ENCODE measurements at regions of chr20 and their contacts with region 1.

Region 1: GRCh38 chr20:33731693-33732165 is at the start of gene ZNF341:
- DNase-seq: peak in 1 of 2 experiments; percentile 69
- H3K4me3 ChIP-seq: peak within 1 kb of the TSS; percentile 64
- H3K27ac ChIP-seq: peak within 1 kb of the TSS; percentile 94
- H3K4me1 ChIP-seq: peaks cover 59% of the 10 kb centered on the region
- H3K27me3 ChIP-seq: no peaks in the 10 kb centered on the region
- CTCF ChIP-seq: peak; percentile 83
- total RNA-seq, gene ZNF341: 5.2 and 5.6 TPM in 2 replicates

Region 2: DNA sequence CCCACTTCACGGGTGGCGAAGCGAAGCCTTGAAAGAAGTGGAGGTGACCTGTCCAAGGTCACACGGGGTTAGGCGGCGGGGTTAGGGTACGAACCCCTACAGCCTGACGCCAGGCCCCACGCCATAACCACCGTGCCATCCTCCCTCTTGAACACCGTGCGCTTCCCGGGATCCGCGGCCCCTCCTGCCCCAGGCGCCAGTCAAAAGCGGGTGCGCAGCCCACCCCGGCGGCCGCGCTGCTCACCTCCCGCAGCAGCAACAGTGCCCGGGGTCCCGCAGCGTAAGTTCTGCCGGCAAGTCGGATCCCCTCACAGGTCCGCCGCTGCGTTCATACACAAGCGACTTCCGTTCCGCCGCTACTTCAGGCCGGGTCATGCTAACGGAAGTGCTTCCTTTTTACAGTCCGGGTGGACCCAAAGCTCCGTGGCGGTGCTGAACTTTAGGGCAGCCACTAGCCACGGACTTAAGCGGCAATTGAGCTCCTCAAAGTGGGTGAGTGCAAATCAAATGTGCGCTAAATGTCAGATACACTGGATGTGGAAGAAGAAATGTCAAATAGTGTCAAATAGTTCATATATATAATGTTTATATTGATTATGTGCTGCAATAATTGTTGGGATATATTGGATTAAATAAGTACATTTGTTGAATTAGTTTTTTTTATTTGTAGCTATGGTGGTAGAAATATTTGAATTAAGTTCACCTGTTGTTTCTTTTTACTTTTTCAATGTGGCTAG is 330.4 kb before region 1 on chr20 and contains the start of gene CDK5RAP1:
- CTCF ChIA-PET with region 1: no interaction called
- POLR2A ChIA-PET with region 1: no interaction called
- intact Hi-C with region 1: loop called (anchors 5 kb)
- DNase-seq: peak; percentile 82
- H3K4me3 ChIP-seq: peak within 1 kb of the TSS; percentile 98
- H3K27ac ChIP-seq: no peak within 1 kb of the TSS
- H3K4me1 ChIP-seq: peaks cover 13% of the 10 kb centered on the region
- H3K27me3 ChIP-seq: no peaks in the 10 kb centered on the region
- CTCF ChIP-seq: no peak
- total RNA-seq, gene CDK5RAP1: 39.7 and 45.3 TPM in 2 replicates

Region 3: DNA sequence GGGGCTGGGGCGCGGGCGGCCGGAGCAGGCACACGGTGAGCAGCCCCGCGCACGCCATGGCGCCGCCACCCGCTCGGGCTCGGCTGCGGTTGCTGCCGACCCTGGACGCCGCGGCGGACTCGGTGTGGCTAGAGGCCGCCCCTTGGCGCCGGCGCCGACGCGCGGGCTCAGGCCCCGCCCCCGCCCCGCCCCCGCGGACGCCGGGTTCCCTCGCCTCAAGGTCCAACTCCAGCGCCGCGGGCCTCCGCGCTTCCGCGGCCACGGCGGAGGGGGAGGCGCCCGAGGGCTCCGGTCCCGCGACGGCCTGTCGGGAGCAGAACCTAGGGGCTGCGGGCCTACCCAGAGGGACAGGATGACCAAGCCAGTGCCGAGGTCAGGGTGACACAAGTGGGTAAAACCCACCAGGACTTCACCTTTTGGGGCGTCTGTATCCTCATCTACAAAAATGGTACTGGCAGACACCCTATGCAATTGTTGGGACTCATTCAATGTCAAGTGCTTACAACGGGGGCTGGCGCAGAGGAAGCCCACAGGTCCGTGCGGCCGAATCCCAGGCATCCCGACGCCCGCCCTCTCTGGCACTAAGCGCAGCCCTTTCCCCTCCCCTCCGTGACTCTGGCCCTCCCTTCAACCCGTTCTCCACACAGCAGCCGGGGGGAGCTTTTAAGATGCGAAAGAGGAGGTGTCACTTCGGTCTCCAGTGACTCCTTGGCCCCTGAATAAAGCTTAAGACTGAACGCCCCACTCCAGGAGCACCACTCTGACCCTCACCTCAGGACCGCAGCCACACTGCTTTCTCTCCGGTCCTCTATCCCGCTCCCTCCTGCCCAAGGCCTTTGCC is 57.2 kb before region 1 on chr20 and contains the start of gene NECAB3:
- CTCF ChIA-PET with region 1: no interaction called
- POLR2A ChIA-PET with region 1: interaction called, 4 read pairs
- intact Hi-C with region 1: loop called (anchors 5 kb)
- DNase-seq: peak in 1 of 2 experiments; percentile 90
- H3K4me3 ChIP-seq: peak within 1 kb of the TSS; percentile 96
- H3K27ac ChIP-seq: peak within 1 kb of the TSS; percentile 48
- H3K4me1 ChIP-seq: peaks cover 16% of the 10 kb centered on the region; the same call in 1 of the 2 replicates
- H3K27me3 ChIP-seq: no peaks in the 10 kb centered on the region
- CTCF ChIP-seq: no peak
- total RNA-seq, gene NECAB3: 72.1 and 77.7 TPM in 2 replicates

Region 4: DNA sequence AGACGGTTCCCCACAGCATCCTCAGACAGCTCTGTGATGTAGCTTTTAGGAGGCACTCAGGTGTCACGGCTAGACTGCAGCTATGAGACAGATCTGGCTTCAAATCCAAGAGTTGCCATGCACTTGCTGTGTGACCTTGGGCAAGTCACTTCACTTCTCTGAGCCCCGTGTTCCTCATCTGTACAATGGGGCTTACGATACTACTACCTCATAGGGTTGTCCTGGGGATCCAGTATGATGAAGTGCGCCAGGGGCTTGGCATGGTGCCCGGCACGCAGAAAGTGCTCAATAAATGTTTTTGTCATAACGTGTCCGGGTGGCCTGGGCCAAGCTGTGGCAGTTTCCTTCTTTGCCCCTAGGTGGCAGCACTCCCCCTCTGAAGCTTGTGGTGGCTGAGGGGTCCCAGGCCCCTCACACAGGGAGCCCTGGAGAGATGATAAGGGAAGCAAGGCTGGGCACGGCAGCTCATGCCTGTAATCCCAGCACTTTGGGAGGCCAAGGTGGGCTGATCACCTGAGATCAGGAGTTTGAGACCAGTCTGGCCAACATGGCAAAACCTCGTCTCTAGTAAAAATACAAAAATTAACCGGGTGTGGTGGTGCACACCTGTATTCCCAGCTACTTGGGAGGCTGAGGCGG is 60.3 kb after region 1 on chr20:
- CTCF ChIA-PET with region 1: no interaction called
- POLR2A ChIA-PET with region 1: interaction called, 36 read pairs
- intact Hi-C with region 1: loop called (anchors 1 kb)
- DNase-seq: peak in 1 of 2 experiments; percentile 57
- H3K4me3 ChIP-seq: no peak overlapping the region
- H3K27ac ChIP-seq: no peak overlapping the region; the same call in 1 of the 2 replicates
- H3K4me1 ChIP-seq: peaks cover 76% of the 10 kb centered on the region
- H3K27me3 ChIP-seq: no peaks in the 10 kb centered on the region
- CTCF ChIP-seq: peak; percentile 99

Region 5: GRCh38 chr20:33909331-33909921 is 177.7 kb after region 1 on chr20:
- CTCF ChIA-PET with region 1: no interaction called
- POLR2A ChIA-PET with region 1: no interaction called
- intact Hi-C with region 1: loop called (anchors 1 kb)
- DNase-seq: peak; percentile 68 to 94
- H3K4me3 ChIP-seq: no peak overlapping the region
- H3K27ac ChIP-seq: peak overlapping the region; percentile 56
- H3K4me1 ChIP-seq: peaks cover 35% of the 10 kb centered on the region
- H3K27me3 ChIP-seq: no peaks in the 10 kb centered on the region
- CTCF ChIP-seq: no peak

Region 6: DNA sequence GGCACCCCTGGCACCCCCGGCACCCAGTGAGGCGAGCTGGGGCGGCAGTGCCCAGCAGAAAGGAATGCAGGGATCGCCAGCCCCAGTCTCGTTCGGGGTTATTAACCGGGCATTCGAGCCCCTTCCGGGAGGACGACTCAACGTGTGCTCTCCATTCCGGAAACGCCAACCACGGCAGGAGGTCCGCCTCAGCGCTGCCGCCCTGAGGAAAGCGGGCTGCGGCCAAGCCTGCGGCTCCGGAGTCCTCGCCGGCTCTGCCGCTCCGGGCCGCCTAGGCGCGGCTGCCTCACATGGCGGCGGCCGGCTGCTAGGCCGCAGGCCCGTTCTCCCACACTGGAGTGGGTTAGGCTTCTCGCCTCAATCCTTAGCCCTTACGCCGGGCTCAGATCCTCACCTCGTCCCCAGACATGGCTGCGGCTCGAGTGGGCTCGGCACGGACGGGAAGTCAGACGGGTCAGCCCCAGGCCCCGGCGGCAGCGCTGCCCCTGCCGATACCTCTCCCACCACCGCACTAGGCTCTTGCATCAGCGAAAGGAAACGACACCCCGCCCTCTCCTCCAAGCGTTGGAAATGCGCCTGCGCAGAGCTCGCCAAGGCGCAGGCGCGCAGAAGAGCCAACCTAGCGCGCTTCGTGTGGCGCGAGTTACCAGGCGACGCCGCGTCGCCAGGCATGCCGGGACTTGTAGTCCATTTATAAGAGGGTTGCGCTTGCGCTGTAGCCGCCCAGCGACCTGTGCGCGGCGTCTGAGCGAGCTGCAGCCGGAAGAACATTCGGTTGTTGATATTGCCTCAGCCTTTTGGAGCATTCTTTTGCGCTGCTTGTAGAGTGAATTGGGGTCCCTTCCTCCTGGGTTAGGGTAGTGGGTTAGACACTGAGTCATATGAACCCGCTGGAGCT is 380.2 kb after region 1 on chr20 and contains the start of gene EIF2S2:
- CTCF ChIA-PET with region 1: no interaction called
- POLR2A ChIA-PET with region 1: interaction called, 16 read pairs
- intact Hi-C with region 1: loop called (anchors 5 kb)
- DNase-seq: peak; percentile 96 to 98
- H3K4me3 ChIP-seq: peak within 1 kb of the TSS; percentile 78
- H3K27ac ChIP-seq: peak within 1 kb of the TSS; percentile 92
- H3K4me1 ChIP-seq: peaks cover 27% of the 10 kb centered on the region
- H3K27me3 ChIP-seq: no peaks in the 10 kb centered on the region
- CTCF ChIP-seq: no peak
- total RNA-seq, gene EIF2S2: 129 and 162 TPM in 2 replicates

Measured in PC-9 (cell line).